Mammary epithelial cell (primary cell): ENCODE measurements at regions of chr6 and their contacts with region 1.

Region 1: GRCh38 chr6:3939964-3940363 is 90.8 kb downstream of the FAM50B start:
- DNase-seq: no peak
- H3K4me3 ChIP-seq: no peak overlapping the region
- H3K27ac ChIP-seq: no peak overlapping the region
- H3K4me1 ChIP-seq: no peaks in the 10 kb centered on the region
- H3K27me3 ChIP-seq: no peaks in the 10 kb centered on the region
- CTCF ChIP-seq: no peak

Region 2: GRCh38 chr6:3831761-3832530 is 108.0 kb before region 1 on chr6:
- CTCF ChIA-PET with region 1: no interaction called
- dilution Hi-C with region 1: loop called (anchors 5 kb)
- in situ Hi-C with region 1: no loop called
- intact Hi-C with region 1: no loop called
- DNase-seq: no peak
- H3K4me3 ChIP-seq: no peak overlapping the region
- H3K27ac ChIP-seq: no peak overlapping the region
- H3K4me1 ChIP-seq: peaks cover 15% of the 10 kb centered on the region
- H3K27me3 ChIP-seq: no peaks in the 10 kb centered on the region
- CTCF ChIP-seq: no peak

Region 3: GRCh38 chr6:3929281-3929798 is 10.6 kb before region 1 on chr6:
- CTCF ChIA-PET with region 1: no interaction called
- dilution Hi-C with region 1: no loop called
- in situ Hi-C with region 1: no loop called
- intact Hi-C with region 1: no loop called
- DNase-seq: no peak
- H3K4me3 ChIP-seq: no peak overlapping the region
- H3K27ac ChIP-seq: no peak overlapping the region
- H3K4me1 ChIP-seq: no peaks in the 10 kb centered on the region
- H3K27me3 ChIP-seq: no peaks in the 10 kb centered on the region
- CTCF ChIP-seq: no peak